GM10248 (cell line): ENCODE measurements at regions of chr11 and their contacts with region 1.

Region 1: GRCh38 chr11:58301576-58301975 is 33.5 kb upstream of the OR10W1 start:
- DNase-seq: no peak
- CTCF ChIP-seq: no peak

Region 2: DNA sequence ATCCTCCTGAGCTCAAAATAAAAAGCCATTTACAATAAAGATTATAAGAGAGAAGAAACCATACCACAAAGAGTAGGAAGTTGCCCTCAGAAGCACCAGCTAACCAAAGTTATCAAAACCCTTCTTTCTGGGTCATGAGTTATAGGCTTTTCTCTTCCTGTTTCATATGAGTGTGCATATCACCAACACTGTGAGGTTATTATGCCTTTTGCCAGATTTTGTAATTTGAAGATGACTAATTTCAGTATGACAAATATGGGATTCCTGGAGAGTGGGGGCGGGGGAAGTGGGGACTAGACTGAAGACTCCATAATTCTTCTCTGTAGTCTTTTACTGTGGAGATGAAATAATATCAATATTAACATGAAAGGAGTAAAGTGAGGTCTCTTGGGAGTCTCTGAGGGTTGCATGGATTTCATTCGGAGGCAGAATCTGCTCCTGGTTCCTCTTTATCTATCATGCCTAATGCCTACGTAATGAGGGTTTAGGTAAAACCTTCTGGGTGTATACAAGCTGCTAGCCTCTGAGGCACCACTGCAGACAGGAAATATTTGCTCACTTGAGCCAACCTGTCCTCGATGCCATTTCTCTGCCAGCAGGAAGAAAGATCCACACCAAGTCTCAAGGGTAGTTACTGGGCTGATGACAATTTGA is 272.0 kb after region 1 on chr11:
- CTCF ChIA-PET with region 1: no interaction called
- POLR2A ChIA-PET with region 1: interaction called, 11 read pairs
- DNase-seq: peak; percentile 27
- CTCF ChIP-seq: no peak